ENCODE measurements at regions of chr11 and their contacts with region 1.

Region 1: DNA sequence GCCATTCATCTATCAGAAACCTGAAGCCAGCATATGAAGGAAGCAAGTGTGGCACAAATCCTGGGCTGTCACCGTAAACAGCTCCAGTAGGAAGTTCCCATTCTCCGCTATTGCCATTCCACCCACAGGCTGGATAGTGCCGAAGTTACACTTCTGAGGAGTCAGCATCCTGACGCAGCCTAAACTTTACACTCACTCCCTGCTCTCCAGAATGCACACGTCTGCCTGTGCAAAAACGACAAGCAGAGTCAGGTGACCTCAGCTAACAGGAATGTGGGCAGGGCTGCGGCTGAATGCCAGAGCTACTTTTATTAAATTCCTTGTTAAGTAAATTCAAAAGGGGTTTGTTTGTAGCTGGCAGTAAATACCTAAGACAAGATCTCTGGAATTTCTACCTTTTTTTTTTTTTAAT is 33.7 kb downstream of the NFRKB start:
- DNase-seq: peak; percentile 92 to 100
- H3K4me3 ChIP-seq: peak overlapping the region; percentile 41; the same call in 1 of the 2 replicates
- H3K27ac ChIP-seq: peak overlapping the region; percentile 84
- H3K4me1 ChIP-seq: peaks cover 80% of the 10 kb centered on the region
- H3K27me3 ChIP-seq: no peaks in the 10 kb centered on the region
- CTCF ChIP-seq: no peak

Region 2: DNA sequence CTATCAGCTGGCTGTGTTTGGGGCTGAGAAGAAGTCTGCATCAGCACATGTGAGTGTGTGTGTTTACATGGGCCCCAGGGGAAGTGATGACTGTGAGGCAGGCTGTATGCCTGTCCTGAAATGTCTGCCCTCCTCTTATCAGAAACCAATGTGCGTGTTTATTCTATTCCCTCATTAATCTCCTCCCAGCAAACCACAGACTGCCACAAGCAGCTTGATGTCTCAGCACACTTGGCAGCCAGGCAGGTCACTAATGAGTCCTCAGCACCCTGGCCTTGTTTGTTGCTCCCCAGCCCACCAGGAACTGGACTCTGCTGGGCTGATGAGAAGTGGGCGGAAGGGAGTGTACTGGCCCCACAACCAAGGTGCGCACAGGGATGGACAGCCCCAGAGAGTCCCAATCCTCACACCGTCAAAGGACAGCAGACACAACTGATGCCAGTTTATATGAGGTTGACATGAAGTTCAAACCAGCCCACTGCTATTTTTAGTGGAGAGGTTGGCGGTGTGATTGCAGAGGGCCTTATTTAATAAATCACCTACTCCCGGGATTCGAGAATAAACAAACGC is 1500.2 kb before region 1 on chr11:
- CTCF ChIA-PET with region 1: no interaction called
- POLR2A ChIA-PET with region 1: no interaction called
- intact Hi-C with region 1: no loop called
- DNase-seq: no peak
- H3K4me3 ChIP-seq: no peak overlapping the region
- H3K27ac ChIP-seq: no peak overlapping the region
- H3K4me1 ChIP-seq: no peaks in the 10 kb centered on the region
- H3K27me3 ChIP-seq: no peaks in the 10 kb centered on the region
- CTCF ChIP-seq: no peak

Region 3: GRCh38 chr11:129766898-129767604 is 94.7 kb before region 1 on chr11:
- CTCF ChIA-PET with region 1: interaction called, 3 read pairs
- POLR2A ChIA-PET with region 1: interaction called, 3 read pairs
- intact Hi-C with region 1: loop called (anchors 5 kb)
- DNase-seq: peak in 1 of 2 experiments; percentile 31
- H3K4me3 ChIP-seq: no peak overlapping the region
- H3K27ac ChIP-seq: no peak overlapping the region
- H3K4me1 ChIP-seq: peaks cover 43% of the 10 kb centered on the region
- H3K27me3 ChIP-seq: no peaks in the 10 kb centered on the region
- CTCF ChIP-seq: peak; percentile 69

Region 4: DNA sequence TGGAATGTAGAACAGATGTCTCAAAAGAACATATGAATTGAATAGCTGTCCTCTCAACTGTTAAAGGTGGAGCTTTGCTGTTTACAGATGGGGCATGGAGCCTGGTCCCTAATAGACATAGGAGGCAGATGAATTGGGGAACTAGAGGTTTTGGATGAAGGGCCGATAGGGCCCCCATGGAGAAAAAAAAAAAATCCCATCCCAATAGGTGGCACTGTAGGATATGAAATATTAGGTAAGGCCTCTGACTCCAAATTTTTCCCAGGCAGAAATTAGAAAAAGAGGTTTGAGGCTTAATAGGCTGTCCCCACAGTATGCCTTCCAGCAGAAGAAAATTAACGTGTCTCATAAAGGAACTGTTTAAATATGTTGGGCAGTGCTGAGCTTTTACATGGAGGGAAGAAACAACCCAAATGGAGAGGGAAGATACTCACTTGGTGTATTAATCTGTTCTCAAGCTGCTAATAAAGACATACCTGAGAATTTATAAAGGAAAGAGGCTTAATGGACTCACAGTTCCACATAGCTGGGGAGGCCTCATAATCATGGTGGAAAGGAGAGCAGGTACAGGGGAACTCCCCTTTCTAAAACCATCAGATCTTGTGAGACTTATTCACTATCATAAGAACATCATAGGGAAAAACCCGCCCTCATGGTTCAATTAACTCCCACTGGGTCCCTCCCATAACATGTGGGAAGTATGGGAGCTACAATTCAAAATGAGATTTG is 76.2 kb before region 1 on chr11:
- CTCF ChIA-PET with region 1: interaction called, 3 read pairs
- POLR2A ChIA-PET with region 1: interaction called, 3 read pairs
- intact Hi-C with region 1: loop called (anchors 5 kb)
- DNase-seq: peak in 1 of 2 experiments; percentile 61
- H3K4me3 ChIP-seq: no peak overlapping the region
- H3K27ac ChIP-seq: no peak overlapping the region
- H3K4me1 ChIP-seq: peaks cover 18% of the 10 kb centered on the region
- H3K27me3 ChIP-seq: no peaks in the 10 kb centered on the region
- CTCF ChIP-seq: peak; percentile 73

Region 5: GRCh38 chr11:130055617-130056016 is 193.9 kb after region 1 on chr11:
- CTCF ChIA-PET with region 1: no interaction called
- POLR2A ChIA-PET with region 1: no interaction called
- intact Hi-C with region 1: no loop called
- DNase-seq: no peak
- H3K4me3 ChIP-seq: no peak overlapping the region
- H3K27ac ChIP-seq: no peak overlapping the region
- H3K4me1 ChIP-seq: no peaks in the 10 kb centered on the region
- H3K27me3 ChIP-seq: no peaks in the 10 kb centered on the region
- CTCF ChIP-seq: no peak